CD8-positive, alpha-beta T cell (primary cell): ENCODE measurements at regions of chr7 and their contacts with region 1.

Region 1: GRCh38 chr7:55245271-55245723 is 119.8 kb upstream of the LANCL2 start:
- DNase-seq: no peak
- ATAC-seq: no peak
- H3K4me3 ChIP-seq: no peak overlapping the region
- H3K4me3 Mint-ChIP-seq: no peak overlapping the region
- H3K27ac ChIP-seq: no peak overlapping the region
- H3K27ac Mint-ChIP-seq: no peak overlapping the region
- H3K4me1 ChIP-seq: no peaks in the 10 kb centered on the region
- H3K4me1 Mint-ChIP-seq: no peaks in the 10 kb centered on the region
- H3K27me3 ChIP-seq: no peaks in the 10 kb centered on the region
- H3K27me3 Mint-ChIP-seq: peaks cover 16% of the 10 kb centered on the region
- CTCF ChIP-seq: no peak

Region 2: GRCh38 chr7:55255496-55256435 is 10.5 kb after region 1 on chr7:
- CTCF ChIA-PET with region 1: interaction called, 11 read pairs
- POLR2A ChIA-PET with region 1: no interaction called
- intact Hi-C with region 1: no loop called
- DNase-seq: peak; percentile 18 to 79 (median 63)
- ATAC-seq: peak; percentile 89
- H3K4me3 ChIP-seq: peak overlapping the region; percentile 43 to 55
- H3K4me3 Mint-ChIP-seq: peak overlapping the region; percentile 89
- H3K27ac ChIP-seq: no peak overlapping the region
- H3K27ac Mint-ChIP-seq: no peak overlapping the region
- H3K4me1 ChIP-seq: peaks cover 14% of the 10 kb centered on the region
- H3K4me1 Mint-ChIP-seq: peaks cover 16% of the 10 kb centered on the region
- H3K27me3 ChIP-seq: peaks cover 3 to 12% of the 10 kb centered on the region in 2 experiments
- H3K27me3 Mint-ChIP-seq: peaks cover 48% of the 10 kb centered on the region
- CTCF ChIP-seq: no peak